WTC11 (cell line): ENCODE measurements at regions of chr1 and their contacts with region 1.

Region 1: GRCh38 chr1:232613752-232614381 is 16.1 kb downstream of the SIPA1L2 start:
- DNase-seq: no peak
- ATAC-seq: no peak
- H3K4me3 Mint-ChIP-seq: no peak overlapping the region
- H3K27ac Mint-ChIP-seq: no peak overlapping the region
- H3K4me1 Mint-ChIP-seq: peaks cover 48% of the 10 kb centered on the region
- H3K27me3 Mint-ChIP-seq: no peaks in the 10 kb centered on the region
- CTCF ChIP-seq: no peak

Region 2: DNA sequence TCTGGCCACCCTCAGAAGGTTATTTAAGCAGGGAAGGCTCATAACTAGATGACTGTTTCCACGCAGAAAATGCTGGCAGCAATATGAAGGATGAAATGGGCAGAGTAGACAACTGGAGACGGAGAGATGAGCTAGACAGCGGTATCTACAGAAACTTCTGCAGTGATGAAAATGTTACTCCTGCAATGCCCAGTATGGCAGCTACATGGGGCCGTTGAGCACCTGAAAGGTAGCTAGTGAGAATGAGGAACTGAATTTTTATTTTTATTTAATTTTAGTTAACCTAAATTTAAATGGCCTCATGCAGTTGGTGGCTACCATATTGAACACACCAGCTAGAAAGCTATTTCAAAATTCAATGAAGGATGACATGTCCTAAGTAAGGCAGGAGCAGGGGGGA is 11.2 kb before region 1 on chr1:
- CTCF ChIA-PET with region 1: interaction called, 14 read pairs
- POLR2A ChIA-PET with region 1: no interaction called
- DNase-seq: no peak
- ATAC-seq: peak; percentile 60
- H3K4me3 Mint-ChIP-seq: no peak overlapping the region
- H3K27ac Mint-ChIP-seq: no peak overlapping the region
- H3K4me1 Mint-ChIP-seq: peaks cover 16% of the 10 kb centered on the region
- H3K27me3 Mint-ChIP-seq: no peaks in the 10 kb centered on the region
- CTCF ChIP-seq: peak; percentile 46; the same call in 1 of the 2 replicates